Right ventricle myocardium superior (tissue), 1 donor: ENCODE measurements at regions of chr9 and their contacts with region 1.

Region 1: DNA sequence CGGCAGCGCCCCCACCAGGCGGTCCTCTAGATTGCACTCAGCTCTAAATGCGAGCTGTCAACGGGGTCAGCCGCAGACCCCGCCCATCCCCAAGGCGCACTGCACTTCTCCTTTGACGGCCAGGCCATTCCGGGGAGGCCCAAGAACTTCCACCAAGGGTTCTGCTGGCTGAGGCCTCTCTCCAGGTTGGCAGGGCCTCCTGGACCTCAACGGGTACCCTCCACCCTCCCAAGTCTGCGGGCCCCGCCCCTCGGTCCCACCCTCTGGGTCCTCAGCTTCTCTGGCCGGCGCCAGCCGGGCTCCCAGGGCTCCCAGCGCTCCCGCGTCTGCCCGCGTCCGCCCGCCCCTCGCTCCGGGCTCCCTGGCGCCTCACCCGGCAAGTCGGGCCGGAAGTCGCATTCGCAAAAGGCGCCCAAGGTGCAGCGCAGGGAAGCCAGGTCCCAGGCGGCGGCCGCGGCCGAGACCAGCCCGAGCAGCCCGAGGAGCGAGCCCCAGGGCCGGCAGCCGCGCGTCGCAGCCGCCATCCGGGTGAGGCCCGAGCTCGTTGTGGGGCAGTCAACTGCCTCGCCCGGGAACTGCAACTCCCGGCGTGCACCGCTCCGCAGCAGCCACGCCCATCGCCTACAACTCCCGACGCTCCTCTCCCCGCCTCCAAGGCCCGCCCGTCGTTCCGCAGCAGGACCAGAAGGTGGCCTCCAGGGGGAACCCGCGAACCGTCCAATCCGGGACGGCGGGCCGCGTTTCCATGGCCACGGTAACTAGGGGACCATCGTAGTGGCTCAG is at the start of gene TOR2A:
- DNase-seq: peak; percentile 98
- ATAC-seq: peak; percentile 97
- total RNA-seq, gene TOR2A: 3.3 TPM

Region 2: DNA sequence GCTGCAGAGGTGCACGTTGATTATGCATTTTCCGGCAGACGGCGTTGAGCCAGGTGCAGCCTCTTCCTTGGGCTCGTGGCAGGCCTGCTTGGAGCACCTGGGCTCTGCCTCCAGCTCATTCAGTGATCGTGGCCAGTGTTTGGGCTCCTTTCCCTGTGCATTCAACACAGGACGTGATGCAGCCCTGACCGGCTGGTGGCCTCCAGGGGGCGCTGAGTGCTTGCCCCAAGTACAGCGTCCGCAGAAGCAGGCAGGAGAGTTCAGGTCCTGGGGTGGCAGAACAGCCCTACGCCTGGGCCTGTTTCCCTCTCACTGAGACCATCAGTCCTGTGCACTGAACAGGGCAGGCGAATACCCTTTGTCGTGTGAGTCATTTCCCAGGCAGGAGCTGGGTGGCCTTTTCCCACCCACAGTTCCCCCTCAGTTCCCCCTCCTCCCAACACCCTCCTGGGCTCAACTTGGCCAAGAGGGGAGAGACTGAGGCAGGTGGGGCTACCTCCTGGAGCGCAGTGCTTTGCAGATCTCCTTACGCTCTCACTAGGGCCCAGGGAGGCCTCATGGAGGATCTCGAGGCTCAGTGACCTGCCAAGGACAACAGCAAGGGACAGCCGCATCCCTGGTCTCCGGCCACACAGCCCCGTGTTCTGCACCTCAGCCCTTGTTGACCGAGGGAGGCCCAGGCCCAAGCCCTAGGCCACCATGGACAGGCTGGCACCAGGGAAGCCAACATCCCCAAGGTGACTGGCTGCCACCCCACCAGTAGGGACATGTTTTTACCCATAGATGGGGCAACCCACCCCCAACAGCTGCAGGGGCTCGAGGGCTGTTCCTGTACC is 230.8 kb before region 1 on chr9:
- intact Hi-C with region 1: loop called (anchors 5 kb)
- DNase-seq: peak; percentile 93
- ATAC-seq: peak; percentile 84

Region 3: GRCh38 chr9:127586537-127586936 is 148.4 kb before region 1 on chr9:
- intact Hi-C with region 1: loop called (anchors 2 kb)
- DNase-seq: peak; percentile 82
- ATAC-seq: peak; percentile 94

Region 4: GRCh38 chr9:127785023-127785932 is 50.3 kb after region 1 on chr9:
- intact Hi-C with region 1: loop called (anchors 5 kb)
- DNase-seq: peak; percentile 93
- ATAC-seq: peak; percentile 76

Region 5: GRCh38 chr9:127838375-127839078 is 103.6 kb after region 1 on chr9:
- intact Hi-C with region 1: no loop called
- DNase-seq: peak; percentile 86
- ATAC-seq: peak; percentile 66

Region 6: DNA sequence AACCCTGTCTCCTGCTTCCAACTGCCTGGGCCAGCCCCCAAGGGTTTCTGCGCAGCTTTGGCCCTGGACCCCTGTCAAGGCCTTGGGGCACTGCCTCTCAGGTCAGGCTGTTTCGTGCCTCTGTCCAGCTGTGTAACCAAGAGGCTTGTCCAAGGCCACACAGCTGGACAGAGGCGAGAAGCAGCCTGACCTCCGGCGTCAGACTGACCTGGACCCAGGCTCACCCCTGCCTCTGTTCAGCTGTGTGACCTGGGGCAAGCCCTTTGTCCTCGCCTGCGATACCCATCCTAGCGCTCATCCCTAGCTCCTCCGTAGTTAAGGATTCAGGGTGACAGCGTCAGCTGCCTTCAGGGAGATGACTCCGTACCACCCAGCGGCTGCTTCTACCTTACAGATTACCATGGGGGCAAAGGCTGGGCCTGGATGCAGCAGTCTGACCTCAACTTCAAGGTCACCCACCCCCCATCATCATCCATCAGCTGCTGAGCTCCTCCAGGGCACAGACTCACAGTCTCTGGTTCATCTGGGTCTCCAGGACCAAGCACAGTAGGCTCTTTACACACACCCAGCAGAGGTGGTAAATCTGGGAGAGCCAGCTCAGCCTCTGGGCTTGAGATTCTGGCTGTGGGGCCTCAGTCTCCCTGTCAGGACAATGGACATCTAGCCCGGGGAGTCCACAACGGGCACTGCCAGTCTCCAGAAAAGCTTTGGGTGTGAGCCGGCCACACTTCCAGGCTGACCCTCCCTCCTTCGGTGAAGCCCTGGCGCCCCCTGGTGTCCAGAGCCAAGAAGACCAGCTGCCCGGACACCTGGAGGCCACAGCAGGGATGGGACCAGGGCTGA is 134.6 kb after region 1 on chr9:
- intact Hi-C with region 1: loop called (anchors 5 kb)
- DNase-seq: peak; percentile 93
- ATAC-seq: peak; percentile 76

Region 7: DNA sequence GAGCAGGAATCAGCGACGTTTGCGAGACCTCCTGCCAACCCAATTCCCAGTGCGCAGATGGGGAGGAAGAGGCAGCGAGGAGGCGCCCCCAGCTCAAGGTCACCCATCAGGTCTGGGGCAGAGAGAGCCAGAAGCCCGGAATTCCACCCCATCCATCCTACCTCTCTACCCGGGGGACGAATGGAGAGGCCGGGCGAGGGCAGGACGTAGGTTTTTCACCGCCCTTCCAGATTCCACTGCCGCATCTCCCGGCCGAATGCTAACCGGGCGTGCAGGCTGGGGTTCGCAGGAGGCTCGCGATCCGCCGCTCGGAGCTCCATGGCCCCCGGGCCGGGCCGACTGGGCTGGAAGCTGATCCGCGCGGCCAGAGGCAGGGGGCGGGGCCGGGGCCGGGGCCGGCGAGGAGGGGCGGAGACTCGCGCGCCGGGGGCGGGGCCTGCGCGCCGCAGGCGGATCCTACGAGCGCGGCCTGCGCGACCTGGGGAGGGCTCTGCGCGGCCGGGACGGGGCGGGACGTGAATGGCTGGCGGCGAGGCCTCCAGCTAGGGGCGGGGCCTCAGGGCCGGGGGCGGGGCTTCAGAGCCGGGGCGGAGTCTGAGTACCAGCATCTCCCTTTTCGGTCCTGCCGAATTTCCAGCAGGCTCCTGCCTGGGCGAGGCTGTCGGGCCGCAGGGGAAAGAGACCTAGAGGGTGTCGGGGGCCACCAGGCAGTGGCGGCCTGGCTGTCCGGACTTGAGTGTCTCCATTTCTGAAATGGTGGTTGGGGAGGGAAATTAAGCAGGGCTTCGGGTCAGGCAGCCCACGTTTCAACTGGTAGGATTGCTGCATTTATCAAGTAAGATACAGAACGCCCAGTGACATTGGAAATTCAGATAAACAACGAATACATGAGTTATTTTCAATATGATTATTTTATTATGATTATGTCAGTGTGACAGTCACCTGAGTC is 182.0 kb after region 1 on chr9 and contains the start of gene ST6GALNAC4:
- intact Hi-C with region 1: loop called (anchors 1 kb)
- DNase-seq: peak; percentile 97
- ATAC-seq: peak; percentile 96
- total RNA-seq, gene ST6GALNAC4: 18.1 TPM